Activated CD4-positive, alpha-beta T cell treated with anti-CD3 and anti-CD28 coated beads, Interleukin-2, amount 10 ng/mL, durations not matched to agents 24 days and 14 days (primary cell): ENCODE measurements at regions of chr6 and their contacts with region 1.

Region 1: GRCh38 chr6:13355043-13355951 is 27.0 kb upstream of the TBC1D7 start:
- DNase-seq: peak; percentile 84
- H3K4me3 Mint-ChIP-seq: peak overlapping the region; percentile 74
- H3K27ac Mint-ChIP-seq: peak overlapping the region; percentile 97
- H3K4me1 Mint-ChIP-seq: peaks cover 57% of the 10 kb centered on the region
- H3K27me3 Mint-ChIP-seq: no peaks in the 10 kb centered on the region

Region 2: GRCh38 chr6:13302751-13303667 is 52.3 kb before region 1 on chr6:
- intact Hi-C with region 1: loop called (anchors 2 kb)
- DNase-seq: peak; percentile 85
- H3K4me3 Mint-ChIP-seq: peak overlapping the region; percentile 49
- H3K27ac Mint-ChIP-seq: peak overlapping the region; percentile 79
- H3K4me1 Mint-ChIP-seq: peaks cover 24% of the 10 kb centered on the region
- H3K27me3 Mint-ChIP-seq: no peaks in the 10 kb centered on the region

Region 3: DNA sequence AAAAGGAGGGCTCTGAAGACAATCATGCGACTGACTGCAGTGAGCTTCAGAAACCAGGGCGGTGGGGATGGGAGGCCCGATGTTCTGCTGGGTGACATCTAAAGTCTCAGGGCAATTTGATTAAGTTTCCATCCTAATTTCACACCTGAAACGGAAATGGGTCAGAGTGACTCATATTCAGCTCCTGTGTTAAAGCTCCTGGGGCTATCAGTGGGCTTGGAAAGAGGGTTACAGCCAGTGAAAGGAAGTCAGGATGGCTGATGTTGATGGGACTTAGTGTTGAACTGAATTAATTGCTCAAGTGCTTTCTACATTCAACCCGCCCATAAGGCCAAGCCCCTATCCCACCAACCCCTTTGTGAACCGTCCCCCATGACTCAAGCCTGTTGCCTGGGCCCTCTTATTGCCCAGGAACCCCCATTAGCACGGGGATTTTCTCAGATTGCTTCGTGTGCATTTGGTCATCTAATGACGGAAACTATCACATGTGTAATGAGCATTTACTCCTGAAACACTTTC is 20.1 kb after region 1 on chr6:
- intact Hi-C with region 1: loop called (anchors 1 kb)
- DNase-seq: peak; percentile 70
- H3K4me3 Mint-ChIP-seq: peak overlapping the region; percentile 28
- H3K27ac Mint-ChIP-seq: peak overlapping the region; percentile 39
- H3K4me1 Mint-ChIP-seq: peaks cover 19% of the 10 kb centered on the region
- H3K27me3 Mint-ChIP-seq: no peaks in the 10 kb centered on the region

Region 4: GRCh38 chr6:13454286-13455221 is 99.3 kb after region 1 on chr6:
- intact Hi-C with region 1: loop called (anchors 1 kb)
- DNase-seq: peak; percentile 85
- H3K4me3 Mint-ChIP-seq: peak overlapping the region; percentile 42
- H3K27ac Mint-ChIP-seq: peak overlapping the region; percentile 93
- H3K4me1 Mint-ChIP-seq: peaks cover 43% of the 10 kb centered on the region
- H3K27me3 Mint-ChIP-seq: no peaks in the 10 kb centered on the region

Region 5: GRCh38 chr6:13487122-13488014 is 132.1 kb after region 1 on chr6 and contains the start of gene GFOD1:
- intact Hi-C with region 1: loop called (anchors 1 kb)
- DNase-seq: peak; percentile 95
- H3K4me3 Mint-ChIP-seq: peak within 1 kb of the TSS; percentile 96
- H3K27ac Mint-ChIP-seq: peak within 1 kb of the TSS; percentile 88
- H3K4me1 Mint-ChIP-seq: peaks cover 42% of the 10 kb centered on the region
- H3K27me3 Mint-ChIP-seq: peaks cover 11% of the 10 kb centered on the region
- total RNA-seq, gene GFOD1: 9.8 and 10.2 TPM in 2 replicates

Region 6: DNA sequence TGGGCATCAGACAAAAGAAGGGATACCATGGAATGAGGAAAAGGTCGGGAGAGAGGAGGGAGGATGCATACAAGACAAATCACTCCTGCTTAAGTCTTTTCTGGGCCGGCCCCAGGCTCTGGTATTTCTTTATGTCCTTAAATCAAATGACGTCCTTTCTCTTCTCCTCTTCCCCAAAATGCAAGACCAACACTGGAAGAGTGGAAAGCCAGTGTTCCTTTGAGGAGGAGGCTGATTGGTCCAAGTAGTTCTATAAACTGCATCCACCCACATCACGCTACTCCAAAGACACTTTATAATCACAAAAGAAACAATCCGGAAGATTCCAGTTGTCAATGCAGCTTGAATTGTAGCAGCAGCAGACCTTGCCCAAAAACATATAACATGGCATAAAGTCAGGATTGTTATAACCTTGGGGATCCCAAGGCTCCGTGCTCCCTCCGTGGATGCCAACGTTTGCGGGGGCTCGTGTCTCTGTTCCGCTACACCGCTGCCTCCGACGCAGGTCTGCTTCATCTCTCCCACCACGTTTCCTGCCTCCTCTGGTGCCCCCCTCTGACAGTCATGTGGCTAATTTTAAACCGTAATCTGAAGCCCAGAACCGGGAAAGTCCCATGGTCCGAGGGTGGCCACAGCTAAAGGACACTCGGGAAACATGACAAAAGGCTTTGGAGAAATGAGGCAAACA is 412.0 kb after region 1 on chr6:
- intact Hi-C with region 1: loop called (anchors 10 kb)
- DNase-seq: peak; percentile 63
- H3K4me3 Mint-ChIP-seq: peak overlapping the region; percentile 51
- H3K27ac Mint-ChIP-seq: no peak overlapping the region
- H3K4me1 Mint-ChIP-seq: peaks cover 36% of the 10 kb centered on the region
- H3K27me3 Mint-ChIP-seq: no peaks in the 10 kb centered on the region